ENCODE measurements at regions of chr1 and their contacts with region 1.

Region 1: DNA sequence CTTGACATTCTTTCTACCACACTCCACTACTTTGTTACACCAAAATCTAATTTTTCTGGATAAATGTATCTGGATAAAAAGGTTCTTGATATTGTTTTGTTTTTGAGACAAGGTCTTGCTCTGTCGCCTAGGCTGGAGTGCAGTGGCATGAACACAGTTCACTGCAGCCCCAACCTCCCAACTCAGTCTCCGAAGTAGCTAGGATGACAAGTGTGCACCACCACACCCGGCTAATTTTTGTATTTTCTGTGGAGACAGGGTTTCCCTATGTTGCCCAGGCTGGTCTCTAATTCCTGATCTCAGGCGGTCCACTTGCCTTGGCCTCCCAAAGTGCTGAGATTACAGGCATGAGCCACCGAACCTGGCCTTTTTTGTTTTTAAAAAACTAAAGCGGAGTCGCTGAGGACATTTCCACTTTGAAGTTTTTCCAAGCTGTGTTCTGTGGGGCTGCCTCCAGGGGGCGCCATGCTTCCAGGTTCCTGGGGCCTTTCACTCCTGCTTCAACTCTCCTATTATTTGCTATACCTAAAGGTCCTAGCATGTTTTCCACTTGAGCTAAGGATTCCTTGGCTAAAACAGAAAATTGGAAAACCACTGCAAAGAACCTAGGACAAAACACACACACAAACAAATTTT is 14.1 kb upstream of the NCMAP start:
- DNase-seq: no peak
- ATAC-seq: no peak
- H3K4me3 ChIP-seq: no peak overlapping the region
- H3K27ac ChIP-seq: no peak overlapping the region
- H3K4me1 ChIP-seq: peaks cover 2% of the 10 kb centered on the region
- H3K27me3 ChIP-seq: peaks cover 0 to 9% of the 10 kb centered on the region in 2 experiments; a peak in 2 of 4 replicates
- CTCF ChIP-seq: peak; percentile 35 to 50 (median 39); a peak in 5 of 6 replicates
- EP300 ChIP-seq: no peak
- POLR2A ChIP-seq: no peak
- RAD21 ChIP-seq: peak; percentile 28

Region 2: GRCh38 chr1:24526940-24527542 is 14.8 kb before region 1 on chr1:
- CTCF ChIA-PET with region 1: interaction called, 22 read pairs
- POLR2A ChIA-PET with region 1: interaction called, 3 read pairs
- RAD21 ChIA-PET with region 1: no interaction called
- SMC1A ChIA-PET with region 1: no interaction called
- in situ Hi-C with region 1: no loop called
- intact Hi-C with region 1: no loop called
- DNase-seq: no peak
- ATAC-seq: 0 out of 3 replicates have a peak, but pooled peaks have one; percentile 29
- H3K4me3 ChIP-seq: no peak overlapping the region
- H3K27ac ChIP-seq: no peak overlapping the region
- H3K4me1 ChIP-seq: no peaks in the 10 kb centered on the region
- H3K27me3 ChIP-seq: no peaks in the 10 kb centered on the region; a peak in 2 of 4 replicates
- CTCF ChIP-seq: peak; percentile 30 to 52 (median 47); a peak in 4 of 6 replicates
- EP300 ChIP-seq: no peak
- POLR2A ChIP-seq: no peak
- RAD21 ChIP-seq: peak; percentile 33; the same call in 1 of the 2 replicates

Region 3: DNA sequence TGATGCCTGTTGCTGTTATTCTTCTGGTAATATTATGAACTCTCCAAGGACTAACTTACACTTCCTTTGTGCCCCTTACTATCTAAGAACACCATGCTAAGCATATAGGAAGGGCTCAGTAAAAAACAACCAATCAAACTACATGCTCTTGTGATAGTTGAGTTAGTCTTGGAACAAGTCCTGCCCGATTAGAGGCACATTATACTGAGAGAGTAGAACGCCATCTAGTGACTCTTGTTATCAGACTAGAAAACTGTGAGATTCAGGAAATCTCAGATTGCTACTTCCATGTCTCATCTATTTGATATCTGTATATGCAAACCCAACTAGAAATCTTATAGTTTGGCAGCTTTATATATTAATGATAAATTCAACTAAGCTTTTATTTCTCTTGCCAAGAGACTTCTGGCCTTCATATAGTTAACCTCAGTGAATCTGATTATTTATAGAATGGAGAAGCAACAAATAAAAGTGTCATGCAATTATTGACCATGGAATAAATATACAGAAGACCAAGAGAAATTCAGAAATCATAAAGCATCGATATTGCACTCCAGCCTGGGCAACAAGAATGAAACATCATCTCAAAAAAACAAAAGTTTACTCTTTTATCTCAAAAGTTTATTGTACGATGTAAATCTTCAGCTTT is 93.5 kb after region 1 on chr1:
- CTCF ChIA-PET with region 1: interaction called, 5 read pairs
- POLR2A ChIA-PET with region 1: no interaction called
- RAD21 ChIA-PET with region 1: interaction called, 3 read pairs
- SMC1A ChIA-PET with region 1: no interaction called
- in situ Hi-C with region 1: no loop called
- intact Hi-C with region 1: loop called (anchors 5 kb)
- DNase-seq: no peak
- ATAC-seq: peak; percentile 86
- H3K4me3 ChIP-seq: no peak overlapping the region
- H3K27ac ChIP-seq: no peak overlapping the region
- H3K4me1 ChIP-seq: no peaks in the 10 kb centered on the region
- H3K27me3 ChIP-seq: no peaks in the 10 kb centered on the region
- CTCF ChIP-seq: peak; percentile 44 to 70 (median 57); a peak in 4 of 6 replicates
- EP300 ChIP-seq: no peak
- POLR2A ChIP-seq: no peak
- RAD21 ChIP-seq: peak; percentile 68